ENCODE measurements at regions of chr11 and their contacts with region 1.

Region 1: DNA sequence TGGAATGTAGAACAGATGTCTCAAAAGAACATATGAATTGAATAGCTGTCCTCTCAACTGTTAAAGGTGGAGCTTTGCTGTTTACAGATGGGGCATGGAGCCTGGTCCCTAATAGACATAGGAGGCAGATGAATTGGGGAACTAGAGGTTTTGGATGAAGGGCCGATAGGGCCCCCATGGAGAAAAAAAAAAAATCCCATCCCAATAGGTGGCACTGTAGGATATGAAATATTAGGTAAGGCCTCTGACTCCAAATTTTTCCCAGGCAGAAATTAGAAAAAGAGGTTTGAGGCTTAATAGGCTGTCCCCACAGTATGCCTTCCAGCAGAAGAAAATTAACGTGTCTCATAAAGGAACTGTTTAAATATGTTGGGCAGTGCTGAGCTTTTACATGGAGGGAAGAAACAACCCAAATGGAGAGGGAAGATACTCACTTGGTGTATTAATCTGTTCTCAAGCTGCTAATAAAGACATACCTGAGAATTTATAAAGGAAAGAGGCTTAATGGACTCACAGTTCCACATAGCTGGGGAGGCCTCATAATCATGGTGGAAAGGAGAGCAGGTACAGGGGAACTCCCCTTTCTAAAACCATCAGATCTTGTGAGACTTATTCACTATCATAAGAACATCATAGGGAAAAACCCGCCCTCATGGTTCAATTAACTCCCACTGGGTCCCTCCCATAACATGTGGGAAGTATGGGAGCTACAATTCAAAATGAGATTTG is 30.1 kb upstream of the TMEM45B start:
- DNase-seq: peak in 6 of 9 donors; percentile 8 to 33 (median 24)
- ATAC-seq: no peak
- H3K4me3 ChIP-seq: no peak overlapping the region
- H3K4me3 Mint-ChIP-seq: no peak overlapping the region
- H3K27ac ChIP-seq: no peak overlapping the region
- H3K27ac Mint-ChIP-seq: peak overlapping the region in 2 of 9 donors; percentile 26 to 74
- H3K4me1 ChIP-seq: no peaks in the 10 kb centered on the region
- H3K4me1 Mint-ChIP-seq: peaks cover 6 to 24% (median 13%) of the 10 kb centered on the region in 7 donors
- H3K27me3 ChIP-seq: no peaks in the 10 kb centered on the region
- H3K27me3 Mint-ChIP-seq: peaks cover 0 to 3% (median 0%) of the 10 kb centered on the region in 5 donors

Region 2: DNA sequence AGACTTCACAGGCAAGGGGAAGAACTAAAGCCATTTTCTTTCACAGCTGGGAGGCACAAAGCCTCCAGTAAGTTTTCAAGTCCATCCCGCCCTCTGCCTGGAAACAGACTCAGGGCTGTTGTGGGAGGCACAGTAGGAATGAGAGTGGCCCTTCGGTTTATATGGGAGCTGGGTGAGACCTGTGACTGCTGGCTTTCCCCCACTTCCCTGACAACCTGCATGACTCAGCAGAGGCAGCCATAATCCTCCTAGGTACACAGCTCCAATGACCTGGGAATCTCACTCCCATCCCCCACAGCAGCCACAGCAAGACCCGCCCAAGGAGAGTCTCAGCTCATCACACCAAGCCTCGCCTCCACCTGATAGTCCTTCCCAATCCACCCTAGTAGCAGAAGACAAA is 18.0 kb after region 1 on chr11:
- CTCF ChIA-PET with region 1: interaction called, 15 read pairs
- POLR2A ChIA-PET with region 1: interaction called, 7 read pairs
- intact Hi-C with region 1: loop called in 1 of 2 experiments (anchors 2 kb)
- DNase-seq: no peak
- ATAC-seq: no peak
- H3K4me3 ChIP-seq: no peak overlapping the region
- H3K4me3 Mint-ChIP-seq: peak overlapping the region; percentile 64 to 85 (median 78)
- H3K27ac ChIP-seq: peak overlapping the region; percentile 17
- H3K27ac Mint-ChIP-seq: peak overlapping the region; percentile 44 to 99 (median 91)
- H3K4me1 ChIP-seq: peaks cover 0 to 31% of the 10 kb centered on the region in 2 donors
- H3K4me1 Mint-ChIP-seq: peaks cover 25 to 90% (median 73%) of the 10 kb centered on the region in 7 donors
- H3K27me3 ChIP-seq: no peaks in the 10 kb centered on the region
- H3K27me3 Mint-ChIP-seq: peaks cover 0 to 37% (median 0%) of the 10 kb centered on the region in 5 donors

Region 3: DNA sequence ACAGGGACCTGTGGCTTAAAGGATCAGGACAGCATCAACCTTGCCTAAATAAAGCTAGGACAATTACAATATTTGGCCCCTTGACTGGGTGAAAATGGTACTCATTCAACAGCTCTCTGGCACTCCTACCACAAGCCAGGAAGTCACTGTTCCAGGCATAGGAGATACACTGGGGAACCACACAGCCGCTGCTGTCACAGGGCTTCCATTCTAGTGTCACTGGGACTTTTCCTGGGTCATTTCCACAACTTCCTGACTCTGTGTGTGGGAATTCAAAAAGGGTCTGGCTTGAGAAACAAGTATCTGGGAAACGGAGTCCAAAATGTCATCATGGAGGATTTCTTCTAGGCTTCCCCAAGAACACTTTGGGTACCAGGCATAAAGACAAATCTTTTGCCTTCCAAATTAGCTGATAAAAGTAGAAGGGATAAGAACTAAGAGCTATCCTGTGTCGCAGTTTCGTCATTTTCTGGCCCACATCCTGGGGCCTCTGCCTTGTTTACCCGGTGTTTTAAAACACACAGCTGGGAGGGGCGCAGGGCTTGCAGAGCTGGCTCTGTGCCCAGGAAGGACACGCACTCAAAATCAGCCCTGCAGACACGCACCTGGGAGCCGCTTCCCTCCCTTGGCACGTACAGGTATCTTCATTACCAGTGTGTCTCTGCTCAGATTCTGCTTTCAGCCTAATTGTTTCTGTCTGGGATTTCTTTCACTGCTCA is 68.1 kb after region 1 on chr11:
- CTCF ChIA-PET with region 1: interaction called, 11 read pairs
- POLR2A ChIA-PET with region 1: interaction called, 5 read pairs
- intact Hi-C with region 1: no loop called
- DNase-seq: peak; percentile 34 to 96 (median 93)
- ATAC-seq: peak; percentile 94
- H3K4me3 ChIP-seq: peak overlapping the region; percentile 21
- H3K4me3 Mint-ChIP-seq: peak overlapping the region; percentile 49 to 84 (median 74)
- H3K27ac ChIP-seq: peak overlapping the region; percentile 68
- H3K27ac Mint-ChIP-seq: peak overlapping the region; percentile 94 to 99 (median 98)
- H3K4me1 ChIP-seq: peaks cover 14 to 24% of the 10 kb centered on the region in 2 donors
- H3K4me1 Mint-ChIP-seq: peaks cover 17 to 68% (median 51%) of the 10 kb centered on the region in 7 donors
- H3K27me3 ChIP-seq: no peaks in the 10 kb centered on the region
- H3K27me3 Mint-ChIP-seq: peaks cover 0 to 2% (median 0%) of the 10 kb centered on the region in 5 donors

Region 4: DNA sequence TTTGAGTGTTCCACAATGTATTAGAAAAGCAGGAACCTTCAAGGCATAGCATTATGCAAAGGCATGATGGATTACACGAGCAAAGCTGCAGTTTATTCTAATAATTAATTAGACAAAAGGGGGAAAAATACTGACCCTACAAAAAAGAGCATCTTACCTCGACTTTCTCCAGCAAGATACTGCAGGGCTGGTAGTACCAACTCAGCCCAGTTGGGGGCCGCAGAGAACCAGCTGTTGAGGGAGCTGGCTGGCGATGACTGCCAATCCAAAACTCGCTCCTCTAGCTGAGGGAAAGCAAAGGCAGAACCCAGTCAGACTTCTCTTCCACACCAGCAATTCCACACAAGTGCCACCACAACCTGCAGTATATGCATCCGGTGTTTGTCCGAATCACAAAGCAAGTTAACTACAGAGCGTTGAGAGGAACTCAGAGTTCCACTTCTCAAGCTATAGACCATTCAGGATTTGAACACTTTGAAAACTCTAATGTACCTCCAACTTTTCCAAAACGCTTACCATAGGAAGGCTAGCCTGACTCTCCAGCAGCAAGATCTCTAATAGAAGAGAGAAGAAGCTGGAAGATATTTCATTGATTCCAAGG is 96.1 kb after region 1 on chr11:
- CTCF ChIA-PET with region 1: interaction called, 5 read pairs
- POLR2A ChIA-PET with region 1: no interaction called
- intact Hi-C with region 1: loop called in 1 of 2 experiments (anchors 1 kb)
- DNase-seq: peak; percentile 24 to 54 (median 44)
- ATAC-seq: peak; percentile 71
- H3K4me3 ChIP-seq: no peak overlapping the region
- H3K4me3 Mint-ChIP-seq: no peak overlapping the region
- H3K27ac ChIP-seq: no peak overlapping the region
- H3K27ac Mint-ChIP-seq: peak overlapping the region in 2 of 9 donors; percentile 56 to 63
- H3K4me1 ChIP-seq: no peaks in the 10 kb centered on the region
- H3K4me1 Mint-ChIP-seq: peaks cover 0 to 20% (median 4%) of the 10 kb centered on the region in 7 donors
- H3K27me3 ChIP-seq: no peaks in the 10 kb centered on the region
- H3K27me3 Mint-ChIP-seq: no peaks in the 10 kb centered on the region

Region 5: GRCh38 chr11:129922674-129923073 is 137.1 kb after region 1 on chr11:
- CTCF ChIA-PET with region 1: interaction called, 10 read pairs
- POLR2A ChIA-PET with region 1: no interaction called
- intact Hi-C with region 1: loop called in 1 of 2 experiments (anchors 1 kb)
- DNase-seq: peak in 1 of 9 donors; percentile 0
- ATAC-seq: no peak
- H3K4me3 ChIP-seq: no peak overlapping the region
- H3K4me3 Mint-ChIP-seq: peak overlapping the region in 1 of 10 donors; percentile 35
- H3K27ac ChIP-seq: no peak overlapping the region
- H3K27ac Mint-ChIP-seq: peak overlapping the region in 7 of 9 donors; percentile 13 to 58 (median 28)
- H3K4me1 ChIP-seq: peaks cover 0 to 4% of the 10 kb centered on the region in 2 donors
- H3K4me1 Mint-ChIP-seq: peaks cover 6 to 22% (median 18%) of the 10 kb centered on the region in 7 donors
- H3K27me3 ChIP-seq: no peaks in the 10 kb centered on the region
- H3K27me3 Mint-ChIP-seq: no peaks in the 10 kb centered on the region

Region 6: GRCh38 chr11:129992161-129992944 is 206.8 kb after region 1 on chr11:
- CTCF ChIA-PET with region 1: no interaction called
- POLR2A ChIA-PET with region 1: no interaction called
- intact Hi-C with region 1: loop called in 1 of 2 experiments (anchors 1 kb)
- DNase-seq: peak in 7 of 9 donors; percentile 9 to 55 (median 33)
- ATAC-seq: peak; percentile 73
- H3K4me3 ChIP-seq: no peak overlapping the region
- H3K4me3 Mint-ChIP-seq: no peak overlapping the region
- H3K27ac ChIP-seq: no peak overlapping the region
- H3K27ac Mint-ChIP-seq: peak overlapping the region in 3 of 9 donors; percentile 32 to 66 (median 36)
- H3K4me1 ChIP-seq: no peaks in the 10 kb centered on the region
- H3K4me1 Mint-ChIP-seq: peaks cover 5 to 26% (median 19%) of the 10 kb centered on the region in 7 donors
- H3K27me3 ChIP-seq: no peaks in the 10 kb centered on the region
- H3K27me3 Mint-ChIP-seq: no peaks in the 10 kb centered on the region

Region 7: GRCh38 chr11:130131961-130132850 is 346.7 kb after region 1 on chr11:
- CTCF ChIA-PET with region 1: interaction called, 4 read pairs
- POLR2A ChIA-PET with region 1: interaction called, 3 read pairs
- intact Hi-C with region 1: loop called (anchors 1 kb)
- DNase-seq: peak in 8 of 9 donors; percentile 38 to 76 (median 68)
- ATAC-seq: peak; percentile 91
- H3K4me3 ChIP-seq: no peak overlapping the region
- H3K4me3 Mint-ChIP-seq: no peak overlapping the region
- H3K27ac ChIP-seq: no peak overlapping the region
- H3K27ac Mint-ChIP-seq: peak overlapping the region in 1 of 9 donors; percentile 6
- H3K4me1 ChIP-seq: no peaks in the 10 kb centered on the region
- H3K4me1 Mint-ChIP-seq: no peaks in the 10 kb centered on the region
- H3K27me3 ChIP-seq: no peaks in the 10 kb centered on the region
- H3K27me3 Mint-ChIP-seq: no peaks in the 10 kb centered on the region

Measured in naive thymus-derived CD4-positive, alpha-beta T cell (primary cell).